HepG2 (cell line): ENCODE measurements at regions of chr20 and their contacts with region 1.

Region 1: GRCh38 chr20:44056010-44056698 is 130.8 kb downstream of the JPH2 start:
- DNase-seq: peak; percentile 61
- ATAC-seq: peak; percentile 98
- H3K4me3 ChIP-seq: no peak overlapping the region
- H3K27ac ChIP-seq: no peak overlapping the region
- H3K4me1 ChIP-seq: no peaks in the 10 kb centered on the region
- H3K27me3 ChIP-seq: peaks cover 4 to 50% of the 10 kb centered on the region in 2 experiments; a peak in 3 of 5 replicates
- CTCF ChIP-seq: peak; percentile 82
- EP300 ChIP-seq: no peak
- POLR2A ChIP-seq: no peak
- RAD21 ChIP-seq: peak; percentile 80

Region 2: DNA sequence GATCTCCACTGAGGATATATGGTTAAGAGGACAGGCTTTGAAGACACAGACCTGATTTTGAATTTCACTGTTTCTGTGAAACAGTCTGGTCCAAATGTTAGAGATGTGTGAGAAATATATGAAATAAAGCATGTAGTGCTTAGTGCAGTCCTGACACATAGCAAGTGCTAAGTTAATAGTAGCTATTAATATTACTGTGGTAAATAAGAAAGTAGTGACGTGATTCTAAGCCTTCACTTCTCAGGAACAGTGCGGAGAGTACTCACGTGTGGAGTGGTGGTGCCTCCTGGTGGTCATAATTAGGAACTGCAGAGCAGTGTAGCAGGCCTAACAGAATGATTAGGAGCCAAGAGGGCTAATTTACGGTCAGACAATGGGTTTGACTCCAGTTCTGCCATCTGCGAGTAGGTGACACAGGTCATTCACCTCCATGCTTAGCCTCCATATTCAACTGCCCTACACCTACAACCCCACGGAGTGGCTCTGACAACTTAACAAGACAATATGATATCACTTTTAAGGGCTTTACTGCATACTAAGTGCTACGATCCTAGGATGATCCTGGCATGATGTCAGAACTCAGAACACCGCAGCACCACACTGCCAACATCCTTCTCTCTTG is 24.6 kb after region 1 on chr20:
- CTCF ChIA-PET with region 1: interaction called, 57 read pairs
- POLR2A ChIA-PET with region 1: no interaction called
- in situ Hi-C with region 1: no loop called
- intact Hi-C with region 1: loop called (anchors 1 kb)
- DNase-seq: peak; percentile 79
- ATAC-seq: peak; percentile 93
- H3K4me3 ChIP-seq: no peak overlapping the region
- H3K27ac ChIP-seq: no peak overlapping the region
- H3K4me1 ChIP-seq: no peaks in the 10 kb centered on the region
- H3K27me3 ChIP-seq: peaks cover 3 to 51% of the 10 kb centered on the region in 2 experiments; a peak in 4 of 5 replicates
- CTCF ChIP-seq: peak; percentile 99
- EP300 ChIP-seq: no peak
- POLR2A ChIP-seq: no peak
- RAD21 ChIP-seq: peak; percentile 95

Region 3: GRCh38 chr20:44097521-44098255 is 41.5 kb after region 1 on chr20:
- CTCF ChIA-PET with region 1: no interaction called
- POLR2A ChIA-PET with region 1: no interaction called
- in situ Hi-C with region 1: no loop called
- intact Hi-C with region 1: loop called (anchors 1 kb)
- DNase-seq: peak; percentile 31
- ATAC-seq: no peak; the same call in 2 of the 3 replicates
- H3K4me3 ChIP-seq: no peak overlapping the region
- H3K27ac ChIP-seq: no peak overlapping the region
- H3K4me1 ChIP-seq: no peaks in the 10 kb centered on the region
- H3K27me3 ChIP-seq: peaks cover 0 to 1% of the 10 kb centered on the region in 2 experiments; a peak in 1 of 5 replicates
- CTCF ChIP-seq: no peak
- EP300 ChIP-seq: no peak
- POLR2A ChIP-seq: no peak
- RAD21 ChIP-seq: no peak